HCT116 (cell line): ENCODE measurements at regions of chr9 and their contacts with region 1.

Region 1: GRCh38 chr9:121059998-121060636 is 10.0 kb upstream of the C5 start:
- DNase-seq: peak; percentile 64
- ATAC-seq: peak; percentile 62
- H3K4me3 ChIP-seq: no peak overlapping the region
- H3K27ac ChIP-seq: no peak overlapping the region
- H3K4me1 ChIP-seq: peaks cover 0 to 3% of the 10 kb centered on the region in 2 experiments; a peak in 1 of 4 replicates
- H3K27me3 ChIP-seq: no peaks in the 10 kb centered on the region
- CTCF ChIP-seq: peak; percentile 65 to 84 (median 74); a peak in 5 of 6 replicates
- POLR2A ChIP-seq: no peak
- RAD21 ChIP-seq: peak; percentile 71

Region 2: DNA sequence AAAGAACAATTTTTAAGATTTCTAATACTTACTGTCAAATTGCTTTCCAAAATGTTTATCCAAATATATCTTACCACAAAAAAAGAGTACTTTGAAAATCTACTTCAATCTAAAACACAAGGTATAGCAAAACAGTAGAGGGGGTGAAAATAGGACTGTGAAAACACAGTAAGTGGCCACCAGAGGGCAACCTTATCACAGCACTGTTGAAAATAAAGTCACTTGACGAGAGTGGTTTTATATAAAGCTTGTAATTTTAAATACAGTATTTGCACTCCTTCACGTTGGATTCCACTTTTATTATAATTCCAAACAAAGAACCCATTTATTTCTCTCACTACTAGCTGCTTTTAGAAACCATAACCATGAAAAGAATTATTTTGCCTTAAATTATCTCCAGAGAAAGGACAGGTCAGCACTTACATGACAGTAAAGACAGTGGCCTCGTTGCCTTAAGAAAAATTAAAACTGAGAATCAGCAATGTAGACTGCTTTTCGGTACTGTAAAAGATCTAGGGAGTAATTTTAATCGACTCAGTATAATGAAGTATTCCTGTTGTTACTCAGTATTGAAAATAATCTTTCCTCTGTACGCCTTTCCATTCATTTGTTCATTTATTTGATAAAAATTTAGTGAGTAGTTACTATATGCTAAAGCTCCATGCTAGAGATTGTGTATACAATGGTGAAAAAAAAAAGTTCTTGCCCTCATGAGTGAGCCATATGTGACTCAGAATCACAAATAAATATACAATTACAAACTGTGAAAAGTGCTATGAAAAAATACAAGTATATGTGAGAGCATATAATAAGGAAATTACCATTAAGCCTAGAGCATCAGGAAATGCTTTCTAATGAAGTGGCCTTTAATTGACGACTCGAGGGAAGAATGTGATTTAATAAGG is 440.1 kb before region 1 on chr9:
- CTCF ChIA-PET with region 1: interaction called, 4 read pairs
- POLR2A ChIA-PET with region 1: no interaction called
- RAD21 ChIA-PET with region 1: no interaction called
- intact Hi-C with region 1: loop called (anchors 10 kb)
- DNase-seq: peak; percentile 47
- ATAC-seq: peak; percentile 94
- H3K4me3 ChIP-seq: no peak overlapping the region
- H3K27ac ChIP-seq: no peak overlapping the region
- H3K4me1 ChIP-seq: peaks cover under 1 to 6% of the 10 kb centered on the region in 2 experiments; a peak in 3 of 4 replicates
- H3K27me3 ChIP-seq: no peaks in the 10 kb centered on the region
- CTCF ChIP-seq: peak; percentile 67 to 92 (median 78)
- POLR2A ChIP-seq: no peak
- RAD21 ChIP-seq: peak; percentile 78

Region 3: GRCh38 chr9:120668399-120668798 is 391.7 kb before region 1 on chr9:
- CTCF ChIA-PET with region 1: no interaction called
- POLR2A ChIA-PET with region 1: no interaction called
- RAD21 ChIA-PET with region 1: no interaction called
- intact Hi-C with region 1: no loop called
- DNase-seq: no peak
- ATAC-seq: no peak
- H3K4me3 ChIP-seq: no peak overlapping the region
- H3K27ac ChIP-seq: no peak overlapping the region
- H3K4me1 ChIP-seq: no peaks in the 10 kb centered on the region
- H3K27me3 ChIP-seq: no peaks in the 10 kb centered on the region
- CTCF ChIP-seq: no peak
- POLR2A ChIP-seq: no peak
- RAD21 ChIP-seq: no peak

Region 4: DNA sequence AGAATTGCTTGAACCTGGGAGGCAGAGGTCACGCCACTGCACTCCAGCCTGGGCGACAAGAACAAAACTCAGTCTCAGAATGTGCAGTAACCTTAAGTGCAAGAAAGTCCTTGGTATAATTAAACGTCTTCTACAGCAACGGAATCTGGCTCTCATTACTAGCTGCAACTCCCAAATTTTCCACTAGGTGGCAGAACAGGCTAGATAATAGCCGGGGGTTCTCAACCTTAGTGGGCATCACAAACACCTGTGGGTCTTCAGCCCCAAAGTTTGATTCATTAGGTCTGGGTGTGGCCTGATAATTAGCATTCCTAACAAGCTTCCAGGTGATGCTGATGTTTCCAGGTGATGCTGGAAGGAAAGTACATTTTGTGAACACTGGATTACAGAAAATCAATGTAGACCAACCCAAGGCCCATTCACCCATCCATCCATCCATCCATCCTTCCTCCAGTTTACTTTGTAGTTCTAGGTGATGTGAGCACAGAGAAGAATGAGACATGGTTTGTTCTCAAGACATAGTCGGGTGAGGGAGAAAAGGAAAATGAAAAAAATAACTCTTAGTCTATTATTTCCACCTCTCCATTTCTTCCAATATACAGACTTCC is 304.2 kb before region 1 on chr9:
- CTCF ChIA-PET with region 1: interaction called, 33 read pairs
- POLR2A ChIA-PET with region 1: no interaction called
- RAD21 ChIA-PET with region 1: interaction called in 1 of 2 experiments, 5 read pairs
- intact Hi-C with region 1: loop called (anchors 2 kb)
- DNase-seq: peak; percentile 24
- ATAC-seq: peak; percentile 86
- H3K4me3 ChIP-seq: no peak overlapping the region
- H3K27ac ChIP-seq: no peak overlapping the region
- H3K4me1 ChIP-seq: no peaks in the 10 kb centered on the region
- H3K27me3 ChIP-seq: no peaks in the 10 kb centered on the region
- CTCF ChIP-seq: peak; percentile 74 to 93 (median 76)
- POLR2A ChIP-seq: no peak
- RAD21 ChIP-seq: peak; percentile 92

Region 5: DNA sequence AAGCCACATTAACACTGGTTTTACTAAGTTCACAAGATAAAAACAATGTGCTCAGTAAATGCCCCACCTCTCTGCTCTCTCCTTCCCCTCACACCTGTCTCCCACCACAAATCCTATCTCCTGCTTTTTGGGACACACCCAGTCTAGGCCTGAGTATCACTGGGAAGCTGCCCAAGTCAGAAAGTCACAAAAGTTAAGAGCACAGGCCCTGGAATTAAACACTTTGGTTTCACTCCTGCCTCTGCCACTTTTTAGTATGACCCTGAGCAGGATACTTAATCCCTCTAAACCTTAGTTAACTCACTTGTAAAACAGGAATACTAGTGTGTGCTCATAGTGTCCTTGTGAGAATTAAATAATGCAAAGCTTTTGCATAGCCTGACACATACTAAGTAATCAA is 21.3 kb before region 1 on chr9:
- CTCF ChIA-PET with region 1: interaction called, 25 read pairs
- POLR2A ChIA-PET with region 1: no interaction called
- RAD21 ChIA-PET with region 1: no interaction called
- intact Hi-C with region 1: no loop called
- DNase-seq: no peak
- ATAC-seq: no peak
- H3K4me3 ChIP-seq: no peak overlapping the region
- H3K27ac ChIP-seq: no peak overlapping the region
- H3K4me1 ChIP-seq: peaks cover 4 to 7% of the 10 kb centered on the region in 2 experiments; a peak in 3 of 4 replicates
- H3K27me3 ChIP-seq: no peaks in the 10 kb centered on the region
- CTCF ChIP-seq: no peak
- POLR2A ChIP-seq: no peak
- RAD21 ChIP-seq: no peak

Region 6: GRCh38 chr9:121048618-121049017 is 11.5 kb before region 1 on chr9:
- CTCF ChIA-PET with region 1: interaction called, 36 read pairs
- POLR2A ChIA-PET with region 1: interaction called, 4 read pairs
- RAD21 ChIA-PET with region 1: no interaction called
- intact Hi-C with region 1: no loop called
- DNase-seq: no peak
- ATAC-seq: no peak
- H3K4me3 ChIP-seq: no peak overlapping the region
- H3K27ac ChIP-seq: no peak overlapping the region
- H3K4me1 ChIP-seq: 0 out of 4 replicates have a peak, but pooled peaks cover 0 to 2% of the 10 kb centered on the region in 2 experiments
- H3K27me3 ChIP-seq: no peaks in the 10 kb centered on the region
- CTCF ChIP-seq: no peak
- POLR2A ChIP-seq: no peak
- RAD21 ChIP-seq: no peak

Region 7: GRCh38 chr9:121071756-121072421 is 11.8 kb after region 1 on chr9:
- CTCF ChIA-PET with region 1: interaction called, 20 read pairs
- POLR2A ChIA-PET with region 1: no interaction called
- RAD21 ChIA-PET with region 1: no interaction called
- intact Hi-C with region 1: no loop called
- DNase-seq: no peak
- ATAC-seq: peak; percentile 13; the same call in 1 of the 2 replicates
- H3K4me3 ChIP-seq: peak overlapping the region; percentile 31 to 54
- H3K27ac ChIP-seq: no peak overlapping the region
- H3K4me1 ChIP-seq: peaks cover 0 to 20% of the 10 kb centered on the region in 2 experiments; a peak in 2 of 4 replicates
- H3K27me3 ChIP-seq: peaks cover 3% of the 10 kb centered on the region; the same call in 1 of the 2 replicates
- CTCF ChIP-seq: peak; percentile 17 to 50 (median 36); a peak in 4 of 6 replicates
- POLR2A ChIP-seq: no peak
- RAD21 ChIP-seq: peak; percentile 58

Region 8: GRCh38 chr9:121233906-121234901 is 174.1 kb after region 1 on chr9:
- CTCF ChIA-PET with region 1: no interaction called
- POLR2A ChIA-PET with region 1: no interaction called
- RAD21 ChIA-PET with region 1: no interaction called
- intact Hi-C with region 1: no loop called
- DNase-seq: no peak
- ATAC-seq: no peak
- H3K4me3 ChIP-seq: no peak overlapping the region
- H3K27ac ChIP-seq: no peak overlapping the region
- H3K4me1 ChIP-seq: peaks cover 0 to 7% of the 10 kb centered on the region in 2 experiments; a peak in 1 of 4 replicates
- H3K27me3 ChIP-seq: no peaks in the 10 kb centered on the region
- CTCF ChIP-seq: no peak
- POLR2A ChIP-seq: no peak
- RAD21 ChIP-seq: no peak

Region 9: GRCh38 chr9:121267689-121268597 is 207.8 kb after region 1 on chr9 and contains the start of gene GSN:
- CTCF ChIA-PET with region 1: no interaction called
- POLR2A ChIA-PET with region 1: no interaction called
- RAD21 ChIA-PET with region 1: no interaction called
- intact Hi-C with region 1: no loop called
- DNase-seq: no peak
- ATAC-seq: peak; percentile 94
- H3K4me3 ChIP-seq: peak within 1 kb of the TSS; percentile 65 to 85
- H3K27ac ChIP-seq: peak within 1 kb of the TSS; percentile 27; the same call in 1 of the 2 replicates
- H3K4me1 ChIP-seq: peaks cover 27 to 29% of the 10 kb centered on the region in 2 experiments
- H3K27me3 ChIP-seq: no peaks in the 10 kb centered on the region
- CTCF ChIP-seq: no peak
- POLR2A ChIP-seq: no peak
- RAD21 ChIP-seq: no peak
- total RNA-seq, gene GSN: 71.3 TPM